ENCODE measurements at regions of chr10 and their contacts with region 1.

Region 1: DNA sequence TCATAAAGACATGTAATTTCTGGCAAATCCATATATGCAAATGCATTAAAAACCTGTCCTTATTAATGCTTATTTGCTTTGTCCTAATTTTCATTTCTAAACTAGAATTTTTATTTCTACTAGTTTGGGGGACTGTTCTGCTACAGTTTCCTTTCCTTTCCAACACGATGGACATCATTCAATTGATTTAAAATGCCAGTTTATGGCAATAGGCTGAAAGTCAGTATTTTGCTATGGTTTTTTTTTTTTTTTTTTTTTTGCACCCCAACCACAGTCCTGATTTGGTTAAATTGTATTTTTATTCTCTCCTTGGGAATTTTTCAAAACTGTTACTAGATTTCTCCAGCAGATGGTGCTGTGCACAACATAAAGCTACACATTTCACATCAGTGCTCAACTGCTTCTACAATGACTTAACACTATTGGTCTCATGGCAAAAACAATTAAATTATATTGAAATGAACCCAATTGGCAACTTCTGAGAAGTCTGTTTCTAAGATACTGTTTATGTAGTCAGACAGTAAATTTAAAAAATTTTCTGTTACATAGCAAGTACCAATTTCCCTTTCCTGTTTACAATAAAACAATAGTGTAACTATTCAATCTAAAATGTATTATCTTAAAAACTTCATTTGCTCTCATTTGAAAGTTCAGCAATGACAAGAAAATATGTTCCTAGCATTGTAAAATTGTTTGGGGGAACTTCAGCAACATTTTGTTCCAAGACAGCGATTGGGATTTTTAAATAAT is 193.8 kb upstream of the CCDC6 start:
- H3K4me3 ChIP-seq: no peak overlapping the region
- H3K27ac ChIP-seq: no peak overlapping the region
- H3K4me1 ChIP-seq: peaks cover 2% of the 10 kb centered on the region
- CTCF ChIP-seq: no peak

Region 2: DNA sequence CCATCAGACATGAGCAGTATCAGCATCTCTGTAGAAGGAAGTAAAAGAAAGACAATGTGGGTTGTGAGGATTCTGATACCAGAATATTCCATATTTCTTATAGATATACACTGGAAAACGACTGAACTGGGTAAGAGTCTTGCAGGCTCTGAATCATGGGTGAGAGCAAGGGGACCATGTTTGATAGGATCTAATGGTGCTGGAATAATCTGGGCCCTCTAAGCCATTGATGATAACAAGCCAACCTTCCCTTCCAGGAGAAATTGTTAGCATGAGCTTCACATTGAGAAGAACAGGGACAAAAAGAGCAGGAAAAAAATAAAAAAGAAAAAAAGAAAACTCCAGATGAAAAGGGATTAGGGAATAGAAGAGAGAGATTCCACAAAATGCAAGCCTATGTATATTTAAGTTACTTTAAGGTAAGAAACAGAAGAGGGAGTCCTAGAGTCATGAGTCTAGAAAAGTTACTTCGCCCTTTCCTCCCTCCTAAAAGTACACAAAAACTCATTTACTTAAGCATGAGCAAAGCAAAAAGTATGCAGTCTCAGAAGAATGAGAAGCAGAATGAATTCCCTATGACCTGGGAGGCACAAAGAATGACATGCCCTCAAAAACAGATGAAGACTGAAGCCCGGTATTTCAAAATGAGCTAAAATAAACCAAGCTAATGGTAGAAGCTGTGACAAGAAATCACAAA is 1171.1 kb after region 1 on chr10:
- CTCF ChIA-PET with region 1: interaction called, 10 read pairs
- POLR2A ChIA-PET with region 1: no interaction called
- H3K4me3 ChIP-seq: no peak overlapping the region
- H3K27ac ChIP-seq: no peak overlapping the region
- H3K4me1 ChIP-seq: no peaks in the 10 kb centered on the region
- CTCF ChIP-seq: no peak

Measured in HEK293 (cell line).